ENCODE measurements at regions of chr13 and their contacts with region 1.

Region 1: DNA sequence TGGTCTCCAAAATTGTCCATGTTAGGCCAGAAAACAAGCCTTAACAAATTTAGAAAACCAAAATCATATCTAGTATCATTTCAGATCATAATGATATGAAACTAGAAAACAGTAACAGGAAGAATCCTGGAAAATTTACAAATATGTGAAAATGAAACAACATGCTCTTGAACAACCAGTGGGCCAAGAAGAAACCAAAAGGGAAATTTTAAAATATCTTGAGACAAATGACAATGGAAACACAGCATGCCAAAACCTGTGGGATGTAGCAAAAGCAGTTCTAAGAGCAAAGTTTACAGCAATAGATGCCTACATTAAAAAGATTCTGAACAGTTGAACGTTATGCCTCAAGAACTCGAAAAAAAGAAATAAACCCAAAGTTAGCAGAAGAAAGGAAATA is 32.6 kb downstream of the VWA8 start:
- DNase-seq: no peak
- ATAC-seq: no peak
- H3K4me3 ChIP-seq: no peak overlapping the region
- H3K4me3 Mint-ChIP-seq: peak overlapping the region; percentile 2 to 79 (median 71)
- H3K27ac ChIP-seq: no peak overlapping the region
- H3K27ac Mint-ChIP-seq: peak overlapping the region in 8 of 9 donors; percentile 2 to 67 (median 48)
- H3K4me1 ChIP-seq: peaks cover 0 to 6% of the 10 kb centered on the region in 2 donors
- H3K4me1 Mint-ChIP-seq: peaks cover 16 to 47% (median 39%) of the 10 kb centered on the region in 7 donors
- H3K27me3 ChIP-seq: no peaks in the 10 kb centered on the region
- H3K27me3 Mint-ChIP-seq: no peaks in the 10 kb centered on the region

Region 2: DNA sequence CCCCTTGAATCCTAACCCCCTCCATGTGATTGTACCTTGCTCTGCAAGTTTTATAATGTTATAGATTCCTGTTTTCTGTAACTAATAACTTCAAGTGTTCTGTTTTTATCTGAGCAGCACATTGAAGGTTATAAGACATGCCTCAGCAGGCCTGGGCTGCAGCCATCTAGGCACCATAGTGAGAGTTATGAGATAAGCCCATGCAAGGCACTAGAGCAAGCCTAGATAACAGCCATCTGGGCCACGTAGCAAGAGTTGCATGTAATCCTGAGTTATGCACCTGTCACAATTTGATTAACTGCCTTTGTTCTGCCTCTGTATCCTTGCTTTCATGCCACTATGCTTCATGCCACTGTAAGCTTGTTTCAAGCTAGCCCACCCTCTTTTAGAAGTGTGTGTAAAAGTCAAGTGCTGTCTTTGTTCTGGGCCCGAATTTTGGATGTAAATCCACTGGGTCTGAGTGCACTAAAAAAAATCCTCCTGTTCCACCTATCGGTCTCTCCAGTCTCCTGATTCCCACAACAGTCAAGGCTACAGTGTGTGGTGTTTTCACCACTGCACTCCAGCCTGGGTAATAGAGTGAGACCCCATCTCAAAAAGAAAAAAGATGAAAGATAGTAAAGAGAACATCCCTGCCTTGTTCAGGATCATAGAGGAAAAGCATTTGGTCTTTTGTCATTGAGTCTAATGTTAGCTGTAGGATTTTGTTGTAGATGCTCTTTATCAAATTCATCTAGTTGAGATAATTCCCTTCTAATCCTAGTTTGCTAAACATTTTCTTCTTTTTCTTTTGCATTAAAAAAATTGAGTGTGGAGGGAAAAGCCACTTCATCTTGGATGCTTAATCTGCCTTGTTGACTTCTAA is 779.7 kb before region 1 on chr13:
- CTCF ChIA-PET with region 1: no interaction called
- POLR2A ChIA-PET with region 1: no interaction called
- intact Hi-C with region 1: no loop called
- DNase-seq: no peak
- ATAC-seq: no peak
- H3K4me3 ChIP-seq: no peak overlapping the region
- H3K4me3 Mint-ChIP-seq: peak overlapping the region in 1 of 10 donors; percentile 27
- H3K27ac ChIP-seq: no peak overlapping the region
- H3K27ac Mint-ChIP-seq: peak overlapping the region in 2 of 9 donors; percentile 46 to 60
- H3K4me1 ChIP-seq: no peaks in the 10 kb centered on the region
- H3K4me1 Mint-ChIP-seq: peaks cover 0 to under 1% (median 0%) of the 10 kb centered on the region in 7 donors
- H3K27me3 ChIP-seq: no peaks in the 10 kb centered on the region
- H3K27me3 Mint-ChIP-seq: no peaks in the 10 kb centered on the region

Region 3: GRCh38 chr13:41502673-41503072 is 425.6 kb before region 1 on chr13:
- CTCF ChIA-PET with region 1: no interaction called
- POLR2A ChIA-PET with region 1: no interaction called
- intact Hi-C with region 1: no loop called
- DNase-seq: peak in 7 of 9 donors; percentile 34 to 63 (median 56)
- ATAC-seq: peak; percentile 72
- H3K4me3 ChIP-seq: no peak overlapping the region
- H3K4me3 Mint-ChIP-seq: peak overlapping the region in 8 of 10 donors; percentile 35 to 68 (median 51)
- H3K27ac ChIP-seq: peak overlapping the region; percentile 22
- H3K27ac Mint-ChIP-seq: peak overlapping the region; percentile 34 to 96 (median 91)
- H3K4me1 ChIP-seq: peaks cover 32 to 43% of the 10 kb centered on the region in 2 donors
- H3K4me1 Mint-ChIP-seq: peaks cover 41 to 63% (median 55%) of the 10 kb centered on the region in 7 donors
- H3K27me3 ChIP-seq: no peaks in the 10 kb centered on the region
- H3K27me3 Mint-ChIP-seq: no peaks in the 10 kb centered on the region

Region 4: GRCh38 chr13:41916173-41916954 is 12.0 kb before region 1 on chr13:
- CTCF ChIA-PET with region 1: no interaction called
- POLR2A ChIA-PET with region 1: interaction called, 7 read pairs
- intact Hi-C with region 1: loop called in 1 of 2 experiments (anchors 1 kb)
- DNase-seq: peak in 5 of 9 donors; percentile 15 to 47 (median 30)
- ATAC-seq: peak; percentile 76
- H3K4me3 ChIP-seq: no peak overlapping the region
- H3K4me3 Mint-ChIP-seq: peak overlapping the region in 9 of 10 donors; percentile 26 to 81 (median 57)
- H3K27ac ChIP-seq: no peak overlapping the region
- H3K27ac Mint-ChIP-seq: peak overlapping the region in 7 of 9 donors; percentile 0 to 87 (median 47)
- H3K4me1 ChIP-seq: peaks cover 11 to 15% of the 10 kb centered on the region in 2 donors
- H3K4me1 Mint-ChIP-seq: peaks cover 26 to 65% (median 44%) of the 10 kb centered on the region in 7 donors
- H3K27me3 ChIP-seq: no peaks in the 10 kb centered on the region
- H3K27me3 Mint-ChIP-seq: no peaks in the 10 kb centered on the region

Region 5: DNA sequence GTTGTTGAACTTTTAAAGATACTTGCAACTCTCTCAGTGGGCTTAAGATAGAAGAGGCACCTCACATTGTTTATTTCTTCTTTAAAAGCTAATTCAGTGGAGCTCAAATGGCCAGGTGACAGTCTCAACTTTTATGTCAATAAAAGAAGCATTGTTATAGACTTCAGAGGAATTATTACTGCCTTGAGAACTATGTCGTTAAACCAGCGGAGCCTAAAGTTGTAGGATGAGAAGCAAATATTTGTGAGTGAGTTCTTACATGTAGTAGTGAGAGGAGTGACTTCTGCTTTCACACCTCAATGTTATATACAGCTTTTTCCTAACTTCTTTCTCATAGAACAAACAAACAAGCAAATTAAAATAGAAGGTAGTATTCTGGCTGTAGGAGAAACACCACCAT is 88.9 kb after region 1 on chr13:
- CTCF ChIA-PET with region 1: no interaction called
- POLR2A ChIA-PET with region 1: no interaction called
- intact Hi-C with region 1: no loop called
- DNase-seq: no peak
- ATAC-seq: no peak
- H3K4me3 ChIP-seq: no peak overlapping the region
- H3K4me3 Mint-ChIP-seq: no peak overlapping the region
- H3K27ac ChIP-seq: no peak overlapping the region
- H3K27ac Mint-ChIP-seq: no peak overlapping the region
- H3K4me1 ChIP-seq: no peaks in the 10 kb centered on the region
- H3K4me1 Mint-ChIP-seq: no peaks in the 10 kb centered on the region
- H3K27me3 ChIP-seq: no peaks in the 10 kb centered on the region
- H3K27me3 Mint-ChIP-seq: peaks cover 5 to 29% (median 23%) of the 10 kb centered on the region in 5 donors

Region 6: GRCh38 chr13:42247883-42248282 is 319.6 kb after region 1 on chr13:
- CTCF ChIA-PET with region 1: no interaction called
- POLR2A ChIA-PET with region 1: no interaction called
- intact Hi-C with region 1: no loop called
- DNase-seq: no peak
- ATAC-seq: no peak
- H3K4me3 ChIP-seq: no peak overlapping the region
- H3K4me3 Mint-ChIP-seq: no peak overlapping the region
- H3K27ac ChIP-seq: no peak overlapping the region
- H3K27ac Mint-ChIP-seq: peak overlapping the region in 2 of 9 donors; percentile 15 to 56
- H3K4me1 ChIP-seq: no peaks in the 10 kb centered on the region
- H3K4me1 Mint-ChIP-seq: peaks cover 0 to 2% (median 0%) of the 10 kb centered on the region in 7 donors
- H3K27me3 ChIP-seq: no peaks in the 10 kb centered on the region
- H3K27me3 Mint-ChIP-seq: peaks cover 0 to 5% (median 0%) of the 10 kb centered on the region in 5 donors